ENCODE measurements at regions of chr9 and their contacts with region 1.

Region 1: GRCh38 chr9:109411798-109412352 is 86.2 kb downstream of the PTPN3 start:
- DNase-seq: no peak
- H3K4me3 ChIP-seq: no peak overlapping the region
- H3K27ac ChIP-seq: no peak overlapping the region
- H3K4me1 ChIP-seq: peaks cover 5 to 15% (median 12%) of the 10 kb centered on the region in 4 experiments; a peak in 5 of 7 replicates
- H3K27me3 ChIP-seq: no peaks in the 10 kb centered on the region
- CTCF ChIP-seq: peak in 2 of 3 experiments; percentile 79 to 89; a peak in 3 of 4 replicates
- EP300 ChIP-seq: no peak
- POLR2A ChIP-seq: no peak
- RAD21 ChIP-seq: peak; percentile 63 to 79

Region 2: DNA sequence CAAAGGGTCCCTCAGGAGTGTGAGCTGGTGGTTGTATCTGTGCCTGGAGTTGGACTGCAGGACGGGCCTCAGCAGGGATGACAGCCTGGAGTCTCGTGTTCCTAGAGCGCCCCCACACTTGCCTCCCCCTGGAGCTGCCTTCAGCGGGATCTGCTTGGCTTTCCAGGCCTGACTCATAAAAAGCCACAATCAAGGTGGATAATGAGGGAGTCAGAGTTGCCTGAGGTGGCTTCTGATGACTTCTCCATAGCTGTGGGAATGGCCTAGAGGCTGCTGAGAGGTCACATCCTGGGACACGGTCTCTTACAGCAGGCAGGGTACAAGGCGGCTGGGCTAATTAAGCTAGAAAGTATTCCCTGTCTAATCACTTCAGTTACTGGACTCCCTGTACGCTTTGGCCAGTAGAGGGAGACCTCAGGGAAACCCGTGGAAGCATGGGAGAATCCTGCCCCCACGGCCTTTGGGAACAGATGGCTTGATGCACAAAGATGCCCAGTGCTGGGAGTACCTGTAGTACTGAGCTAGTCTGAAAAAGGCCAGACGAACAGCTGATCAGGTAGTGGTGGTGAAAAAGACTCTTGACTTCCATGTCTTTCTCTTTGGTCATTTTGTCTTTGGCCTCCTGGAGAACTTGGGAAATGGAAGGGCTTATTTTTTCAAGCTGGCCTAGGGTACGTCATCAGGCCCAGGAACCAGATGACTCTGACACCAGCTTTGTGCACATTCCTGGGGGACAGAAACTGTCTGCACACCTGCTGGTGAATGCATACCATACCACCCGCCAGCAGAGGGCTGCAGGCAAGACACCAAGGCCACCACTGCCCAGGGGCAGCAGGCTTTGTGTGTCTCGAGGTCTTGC is 228.7 kb before region 1 on chr9:
- CTCF ChIA-PET with region 1: interaction called, 36 read pairs
- POLR2A ChIA-PET with region 1: no interaction called
- DNase-seq: peak in 1 of 2 experiments; percentile 58
- H3K4me3 ChIP-seq: no peak overlapping the region
- H3K27ac ChIP-seq: no peak overlapping the region
- H3K4me1 ChIP-seq: 0 out of 7 replicates have a peak, but pooled peaks cover 0 to 2% (median 0%) of the 10 kb centered on the region in 4 experiments
- H3K27me3 ChIP-seq: no peaks in the 10 kb centered on the region
- CTCF ChIP-seq: peak; percentile 47 to 66 (median 59)
- EP300 ChIP-seq: no peak
- POLR2A ChIP-seq: no peak
- RAD21 ChIP-seq: peak; percentile 42 to 53; a peak in 3 of 4 replicates

Region 3: DNA sequence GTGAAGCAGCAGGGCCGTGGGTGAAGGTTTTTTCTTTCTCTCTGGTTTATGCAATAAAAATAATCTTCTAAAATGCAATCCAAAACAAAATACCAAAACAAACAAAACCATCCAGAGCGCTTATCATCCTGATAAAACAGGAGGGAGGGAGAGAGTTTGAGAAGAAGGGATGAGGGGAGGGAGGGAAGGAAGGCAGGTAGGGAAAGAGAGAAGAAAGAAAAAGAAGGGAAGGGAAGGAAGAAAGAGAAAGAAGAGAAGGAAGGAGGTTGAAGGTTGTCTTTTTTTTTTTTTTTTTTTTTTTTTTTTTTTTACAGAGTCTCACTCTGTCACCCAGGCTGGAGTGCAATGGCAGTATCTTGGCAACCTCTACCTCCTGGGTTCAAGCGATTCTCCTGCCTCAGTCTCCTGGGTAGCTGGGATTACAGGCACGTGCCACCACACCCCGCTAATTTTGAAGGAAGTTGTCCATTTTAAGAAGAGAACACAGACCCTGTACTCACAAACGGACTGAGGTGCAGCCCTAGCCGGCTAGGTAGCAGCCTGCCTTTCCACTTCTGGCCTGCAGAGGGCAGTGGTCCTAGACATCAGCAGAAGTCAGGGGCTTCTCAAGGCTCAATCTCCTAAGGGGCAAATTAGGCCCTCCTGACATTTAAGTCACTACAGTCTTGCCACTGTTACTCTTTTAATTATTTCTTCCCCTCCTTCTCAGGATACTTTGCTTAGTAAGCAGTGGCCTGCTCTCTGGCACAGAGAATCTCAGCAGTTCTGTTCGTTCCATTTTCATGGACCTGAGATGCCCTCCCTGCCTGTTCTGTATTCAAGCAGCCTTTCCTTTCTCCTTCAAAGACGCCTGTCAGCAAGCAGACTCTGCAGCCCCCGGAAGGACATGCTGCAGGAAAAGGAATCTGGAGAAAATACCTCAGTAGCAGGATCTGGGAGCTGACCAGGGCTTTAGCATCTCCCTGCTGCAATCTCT is 167.4 kb before region 1 on chr9:
- CTCF ChIA-PET with region 1: interaction called, 11 read pairs
- POLR2A ChIA-PET with region 1: no interaction called
- DNase-seq: peak; percentile 47 to 86
- H3K4me3 ChIP-seq: no peak overlapping the region
- H3K27ac ChIP-seq: no peak overlapping the region
- H3K4me1 ChIP-seq: peaks cover 0 to 6% (median 4%) of the 10 kb centered on the region in 4 experiments; a peak in 6 of 7 replicates
- H3K27me3 ChIP-seq: no peaks in the 10 kb centered on the region
- CTCF ChIP-seq: peak; percentile 81 to 98 (median 92)
- EP300 ChIP-seq: no peak
- POLR2A ChIP-seq: no peak
- RAD21 ChIP-seq: peak; percentile 62 to 74

Region 4: DNA sequence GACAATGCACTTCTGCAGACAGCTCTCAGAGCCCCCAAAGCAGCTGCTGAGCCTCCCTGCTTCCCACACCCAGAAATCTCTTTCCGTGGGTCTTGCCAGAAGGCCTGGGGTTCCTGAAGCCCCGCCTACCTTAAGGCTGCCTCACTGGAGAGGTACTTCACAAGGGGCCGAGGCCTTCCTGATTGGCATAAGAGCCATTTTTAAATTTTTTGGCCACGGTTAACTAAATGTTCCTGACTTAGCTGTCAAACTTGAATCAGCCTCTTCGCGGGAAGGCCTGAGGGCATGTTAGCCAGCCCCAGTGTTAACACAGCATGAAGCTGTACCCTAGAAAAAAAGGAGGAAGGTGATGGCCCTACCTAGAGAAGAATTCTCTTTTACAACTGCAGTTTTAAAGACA is 70.3 kb before region 1 on chr9:
- CTCF ChIA-PET with region 1: interaction called, 18 read pairs
- POLR2A ChIA-PET with region 1: no interaction called
- DNase-seq: no peak
- H3K4me3 ChIP-seq: no peak overlapping the region
- H3K27ac ChIP-seq: no peak overlapping the region
- H3K4me1 ChIP-seq: peaks cover 6 to 9% (median 7%) of the 10 kb centered on the region in 4 experiments; a peak in 5 of 7 replicates
- H3K27me3 ChIP-seq: no peaks in the 10 kb centered on the region
- CTCF ChIP-seq: no peak
- EP300 ChIP-seq: no peak
- POLR2A ChIP-seq: no peak
- RAD21 ChIP-seq: no peak

Region 5: DNA sequence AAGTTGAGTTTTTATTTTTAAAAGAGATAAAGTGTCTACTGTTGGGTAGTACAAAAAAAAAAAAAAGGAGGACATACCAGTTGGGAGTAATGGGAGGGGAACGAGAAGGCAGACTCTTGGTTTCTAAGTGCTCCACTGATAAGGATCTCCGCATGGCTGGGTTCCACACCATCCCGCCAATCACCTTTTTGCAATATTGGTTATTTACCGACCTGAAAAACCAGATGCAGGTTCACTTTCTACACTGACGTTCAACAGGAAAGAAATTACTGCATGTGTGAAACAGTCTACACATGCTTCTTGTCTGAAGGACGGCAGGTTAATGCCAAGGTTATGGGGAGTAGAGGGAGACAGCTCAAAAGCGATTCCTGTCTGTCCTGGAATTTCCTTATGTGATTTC is 10.8 kb after region 1 on chr9:
- CTCF ChIA-PET with region 1: interaction called, 65 read pairs
- POLR2A ChIA-PET with region 1: interaction called, 3 read pairs
- DNase-seq: no peak
- H3K4me3 ChIP-seq: no peak overlapping the region
- H3K27ac ChIP-seq: no peak overlapping the region
- H3K4me1 ChIP-seq: peaks cover 0 to 5% (median 0%) of the 10 kb centered on the region in 4 experiments; a peak in 1 of 7 replicates
- H3K27me3 ChIP-seq: no peaks in the 10 kb centered on the region
- CTCF ChIP-seq: no peak
- EP300 ChIP-seq: no peak
- POLR2A ChIP-seq: no peak
- RAD21 ChIP-seq: no peak

Region 6: DNA sequence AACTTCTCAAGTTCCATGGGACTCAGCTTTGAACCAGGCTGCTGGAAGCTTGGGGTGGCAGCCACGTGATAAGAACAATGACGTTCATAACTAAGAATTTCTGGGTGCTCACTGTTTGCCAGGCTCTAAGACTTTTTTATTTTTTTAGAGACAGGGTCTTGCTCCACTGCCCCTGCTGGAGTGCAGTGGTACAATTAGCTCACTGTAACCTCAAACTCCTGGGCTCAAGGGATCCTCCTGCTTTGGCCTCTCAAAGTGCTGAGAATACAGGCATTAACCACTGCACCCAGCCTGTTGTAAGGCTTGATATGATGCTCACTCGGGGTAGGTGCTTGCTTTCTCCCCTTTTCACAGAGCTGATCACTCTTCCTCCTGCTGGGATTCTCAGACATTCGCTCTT is 47.5 kb after region 1 on chr9:
- CTCF ChIA-PET with region 1: interaction called, 25 read pairs
- POLR2A ChIA-PET with region 1: no interaction called
- DNase-seq: no peak
- H3K4me3 ChIP-seq: no peak overlapping the region
- H3K27ac ChIP-seq: no peak overlapping the region
- H3K4me1 ChIP-seq: peaks cover 0 to 6% (median 1%) of the 10 kb centered on the region in 4 experiments; a peak in 3 of 7 replicates
- H3K27me3 ChIP-seq: no peaks in the 10 kb centered on the region
- CTCF ChIP-seq: no peak
- EP300 ChIP-seq: no peak
- POLR2A ChIP-seq: no peak
- RAD21 ChIP-seq: no peak

Region 7: DNA sequence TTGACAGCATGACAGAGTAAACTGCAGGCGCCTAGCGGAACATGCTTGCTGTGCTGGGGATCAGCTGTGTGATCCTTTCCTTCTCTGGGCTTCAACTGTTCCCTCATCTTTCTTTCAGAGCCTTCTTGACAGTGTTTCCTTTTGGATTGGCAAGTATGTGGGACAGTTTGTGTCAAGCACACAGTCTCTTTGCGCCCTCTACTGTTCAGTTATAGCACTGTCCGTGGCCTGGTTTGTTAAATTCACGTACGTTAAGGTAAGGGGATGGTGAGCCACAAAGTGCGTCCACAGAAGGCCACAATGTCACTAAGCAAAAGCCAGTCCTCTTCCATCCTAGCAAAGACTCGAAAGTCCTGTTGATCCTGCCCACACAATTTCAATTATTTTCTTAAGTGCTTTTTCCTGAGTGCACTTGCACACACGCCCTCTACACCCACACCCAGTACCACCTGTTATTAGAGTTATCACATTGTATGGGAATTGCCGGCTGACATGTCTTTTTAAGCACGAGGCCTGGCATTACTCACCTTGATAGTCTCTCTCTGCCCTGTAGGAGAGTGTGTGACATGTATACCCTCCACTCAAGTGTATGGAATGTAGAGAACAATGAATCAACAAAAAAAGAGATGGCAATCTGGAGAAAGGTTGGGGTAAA is 108.7 kb after region 1 on chr9:
- CTCF ChIA-PET with region 1: interaction called, 13 read pairs
- POLR2A ChIA-PET with region 1: no interaction called
- DNase-seq: peak; percentile 43 to 80
- H3K4me3 ChIP-seq: no peak overlapping the region
- H3K27ac ChIP-seq: no peak overlapping the region
- H3K4me1 ChIP-seq: no peaks in the 10 kb centered on the region
- H3K27me3 ChIP-seq: no peaks in the 10 kb centered on the region
- CTCF ChIP-seq: peak; percentile 55 to 98 (median 87)
- EP300 ChIP-seq: no peak
- POLR2A ChIP-seq: no peak
- RAD21 ChIP-seq: peak; percentile 95 to 97

Region 8: GRCh38 chr9:109914280-109915027 is 502.6 kb after region 1 on chr9:
- CTCF ChIA-PET with region 1: no interaction called
- POLR2A ChIA-PET with region 1: no interaction called
- DNase-seq: no peak
- H3K4me3 ChIP-seq: no peak overlapping the region
- H3K27ac ChIP-seq: no peak overlapping the region
- H3K4me1 ChIP-seq: peaks cover 0 to 7% (median 4%) of the 10 kb centered on the region in 4 experiments; a peak in 3 of 7 replicates
- H3K27me3 ChIP-seq: no peaks in the 10 kb centered on the region
- CTCF ChIP-seq: no peak
- EP300 ChIP-seq: no peak
- POLR2A ChIP-seq: no peak
- RAD21 ChIP-seq: no peak

Measured in H1 (cell line).